ENCODE measurements at regions of chr15 and their contacts with region 1.

Region 1: DNA sequence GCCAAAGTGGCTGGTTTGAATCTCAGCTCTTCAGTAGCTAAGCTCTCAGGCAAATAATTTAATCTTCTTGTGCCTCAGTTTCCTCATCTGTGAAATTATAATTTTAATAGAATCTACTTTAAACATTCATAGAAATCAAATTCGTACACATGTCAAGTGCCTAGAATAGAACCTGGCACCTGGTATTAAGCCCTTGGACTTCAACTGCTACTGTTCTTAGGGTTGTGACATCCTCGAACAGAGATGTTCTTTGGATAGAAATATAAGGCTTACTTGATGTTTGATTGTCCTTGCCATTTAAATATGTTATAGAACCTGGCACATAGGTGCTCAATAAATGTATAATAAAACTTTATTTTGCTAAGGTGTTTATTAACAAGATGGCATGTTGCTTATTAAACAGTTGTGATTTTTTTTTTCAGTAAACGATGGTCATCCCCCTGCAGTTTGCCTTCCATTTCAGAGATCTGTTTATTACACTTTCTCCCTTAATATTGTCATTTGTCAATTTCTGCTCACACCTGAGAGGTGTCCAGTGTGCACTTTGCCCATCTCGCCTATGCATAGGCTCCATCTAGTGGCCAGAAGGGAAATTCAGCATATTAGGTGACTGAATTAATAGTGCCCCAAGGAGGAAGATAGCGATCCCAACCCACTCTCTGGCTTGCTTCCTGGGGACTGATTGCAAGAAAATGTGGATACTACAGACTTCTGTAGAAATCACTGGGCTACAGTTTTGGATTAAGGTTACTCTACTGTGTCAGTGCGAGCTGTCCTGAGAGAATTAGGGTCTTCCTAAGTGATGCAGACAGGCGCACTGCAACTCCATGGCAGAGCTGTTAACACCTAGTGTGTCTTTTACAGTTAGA is 10.7 kb downstream of the IGF1R start:
- DNase-seq: peak; percentile 63 to 80
- ATAC-seq: peak; percentile 76 to 85
- H3K4me3 ChIP-seq: no peak overlapping the region
- H3K27ac ChIP-seq: peak overlapping the region in 1 of 2 experiments; percentile 45; a peak in 1 of 6 replicates
- H3K4me1 ChIP-seq: peaks cover 71% of the 10 kb centered on the region
- CTCF ChIP-seq: peak; percentile 94
- EP300 ChIP-seq: no peak
- POLR2A ChIP-seq: no peak
- RAD21 ChIP-seq: peak; percentile 75 to 82

Region 2: DNA sequence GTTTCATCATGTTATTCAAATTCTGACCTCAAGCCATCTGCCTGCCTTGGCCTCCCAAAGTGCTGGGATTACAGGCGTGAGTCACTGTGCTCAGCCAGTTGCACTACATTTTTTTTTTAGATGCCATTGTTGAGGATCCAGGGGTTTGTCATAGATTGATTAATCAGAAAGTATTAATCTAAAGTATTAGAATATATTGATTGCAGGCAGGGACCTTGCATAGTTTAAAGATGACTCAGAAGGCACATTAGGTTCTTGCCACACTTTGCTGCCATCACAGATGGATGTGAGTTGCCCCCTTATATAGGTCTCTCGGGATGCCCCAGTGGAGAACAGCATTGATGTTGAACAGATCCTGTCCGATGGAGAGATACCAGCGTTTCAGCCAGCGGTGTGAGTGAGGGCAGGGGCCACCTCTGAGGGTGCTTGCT is 30.4 kb after region 1 on chr15:
- CTCF ChIA-PET with region 1: interaction called, 11 read pairs
- POLR2A ChIA-PET with region 1: no interaction called
- DNase-seq: no peak
- ATAC-seq: peak in 1 of 2 experiments; percentile 5; a peak in 1 of 6 replicates
- H3K4me3 ChIP-seq: no peak overlapping the region
- H3K27ac ChIP-seq: peak overlapping the region in 1 of 2 experiments; percentile 42; a peak in 2 of 6 replicates
- H3K4me1 ChIP-seq: peaks cover 94% of the 10 kb centered on the region
- CTCF ChIP-seq: no peak
- EP300 ChIP-seq: no peak
- POLR2A ChIP-seq: no peak
- RAD21 ChIP-seq: no peak

Region 3: DNA sequence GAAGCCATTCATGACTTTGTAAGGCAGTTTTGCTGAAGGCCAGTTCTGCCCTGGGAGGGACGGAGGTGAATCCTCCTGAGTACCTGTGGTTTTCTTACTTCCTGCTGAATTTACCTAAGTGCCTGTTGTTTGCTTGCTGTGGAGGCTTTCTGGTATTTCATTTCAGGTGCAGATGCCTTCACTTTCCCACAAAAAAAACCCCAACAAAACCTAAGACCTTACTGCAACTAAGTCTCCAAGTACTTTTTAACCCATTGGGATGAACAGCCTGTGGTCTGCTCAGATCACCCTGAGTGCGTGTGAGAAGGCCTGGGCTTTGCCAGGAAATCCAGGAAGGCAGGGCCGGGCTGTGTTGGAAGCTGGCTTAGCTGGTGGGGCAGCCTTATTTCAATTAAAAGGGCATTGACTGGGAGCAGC is 54.5 kb after region 1 on chr15:
- CTCF ChIA-PET with region 1: interaction called, 10 read pairs
- POLR2A ChIA-PET with region 1: no interaction called
- DNase-seq: no peak
- ATAC-seq: no peak
- H3K4me3 ChIP-seq: no peak overlapping the region
- H3K27ac ChIP-seq: no peak overlapping the region
- H3K4me1 ChIP-seq: peaks cover 49% of the 10 kb centered on the region
- CTCF ChIP-seq: no peak
- EP300 ChIP-seq: no peak
- POLR2A ChIP-seq: no peak
- RAD21 ChIP-seq: no peak

Region 4: DNA sequence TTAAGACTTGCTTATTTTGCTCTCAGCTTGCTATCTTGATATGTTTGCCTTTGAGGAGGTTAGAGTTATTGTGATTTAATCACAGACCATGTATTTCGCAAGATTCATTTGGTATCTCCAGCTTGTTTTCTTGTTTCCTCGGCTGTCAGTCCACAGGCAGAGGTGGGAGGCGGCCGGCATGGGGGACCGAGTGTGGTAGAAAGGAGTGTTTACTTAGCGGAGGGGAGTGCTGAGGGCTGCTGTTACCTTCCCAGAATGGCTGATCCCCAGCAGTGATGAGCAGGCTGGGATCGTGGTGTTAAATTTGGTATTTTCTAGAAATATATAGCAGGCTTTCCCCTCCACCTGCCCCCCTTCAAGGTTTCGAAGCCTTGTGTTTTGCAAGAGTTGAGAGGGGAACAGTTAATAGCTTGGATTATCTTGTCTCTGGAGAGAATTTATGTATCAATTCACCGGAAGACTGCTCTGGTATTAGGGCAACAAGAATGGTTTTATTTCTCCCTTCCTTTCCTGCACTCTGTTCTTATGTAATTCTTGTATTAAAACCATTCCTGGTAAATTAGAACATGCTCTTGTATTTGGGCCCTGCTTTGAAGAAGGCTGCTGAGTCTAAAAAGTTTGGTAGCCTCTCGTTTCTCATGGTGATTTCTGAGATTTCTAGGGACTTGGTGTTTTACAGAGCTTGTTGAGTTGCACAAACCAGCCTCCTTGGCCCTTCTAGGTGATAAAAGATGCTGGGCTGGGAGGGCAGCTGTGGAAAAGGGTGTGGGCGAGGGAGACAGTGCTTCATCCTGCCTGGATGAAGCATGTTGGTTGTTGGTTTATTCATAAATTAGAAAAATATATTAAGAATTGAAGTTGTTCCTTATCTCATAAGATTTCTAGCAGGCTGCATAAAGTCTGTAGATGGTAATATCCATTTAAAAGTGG is 140.7 kb after region 1 on chr15:
- CTCF ChIA-PET with region 1: no interaction called
- POLR2A ChIA-PET with region 1: no interaction called
- DNase-seq: peak; percentile 57 to 61
- ATAC-seq: peak; percentile 37 to 59; a peak in 5 of 6 replicates
- H3K4me3 ChIP-seq: peak overlapping the region; percentile 17
- H3K27ac ChIP-seq: peak overlapping the region; percentile 87 to 89
- H3K4me1 ChIP-seq: peaks cover 98% of the 10 kb centered on the region
- CTCF ChIP-seq: no peak
- EP300 ChIP-seq: 0 out of 5 replicates have a peak, but pooled peaks of 1 of the 2 experiments have one; percentile 34
- POLR2A ChIP-seq: no peak
- RAD21 ChIP-seq: no peak

Region 5: GRCh38 chr15:99163271-99164062 is 504.4 kb after region 1 on chr15:
- CTCF ChIA-PET with region 1: no interaction called
- POLR2A ChIA-PET with region 1: no interaction called
- DNase-seq: no peak
- ATAC-seq: no peak
- H3K4me3 ChIP-seq: no peak overlapping the region
- H3K27ac ChIP-seq: no peak overlapping the region
- H3K4me1 ChIP-seq: no peaks in the 10 kb centered on the region
- CTCF ChIP-seq: no peak
- EP300 ChIP-seq: no peak
- POLR2A ChIP-seq: no peak
- RAD21 ChIP-seq: no peak

Measured in A549 (cell line).